ENCODE measurements at regions of chr15 and their contacts with region 1.

Region 1: DNA sequence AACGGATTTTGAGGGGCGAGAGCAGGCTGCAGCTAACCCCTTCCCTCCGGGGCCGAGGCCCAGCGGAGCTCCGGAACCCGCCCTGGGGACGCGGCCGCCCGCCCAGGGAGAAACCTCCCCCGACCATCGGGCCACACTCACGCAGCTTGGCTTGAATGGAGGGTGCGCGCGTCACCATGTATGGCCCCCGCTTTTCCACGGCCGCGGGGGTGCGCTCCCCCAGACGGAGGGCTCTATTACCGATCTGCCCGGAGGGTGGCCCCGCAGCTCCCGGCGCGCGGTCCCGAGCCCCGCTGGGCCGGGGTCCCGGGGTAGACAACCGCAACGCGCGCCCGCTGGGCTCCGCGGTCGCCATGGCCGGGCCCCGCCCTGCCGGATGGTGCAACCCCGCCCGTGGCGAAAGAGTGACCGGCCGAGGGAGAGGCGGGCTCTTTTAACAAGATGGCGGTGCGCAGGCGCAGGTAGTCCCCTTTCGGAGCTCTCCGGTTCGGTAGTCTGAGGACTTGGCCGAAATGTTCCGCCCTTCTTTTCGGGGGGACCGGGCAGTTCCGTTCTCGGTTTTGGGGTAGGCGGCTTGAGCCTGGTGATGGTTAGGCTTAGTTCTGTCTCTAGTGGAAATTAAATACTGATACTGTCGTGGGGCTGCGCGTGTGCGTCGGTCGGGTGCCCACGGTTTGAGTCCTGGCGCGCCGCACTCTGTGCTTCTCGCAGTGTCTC is at the start of gene FAM219B:
- DNase-seq: peak; percentile 60
- H3K4me3 ChIP-seq: peak within 1 kb of the TSS; percentile 81
- H3K27ac ChIP-seq: peak within 1 kb of the TSS; percentile 81
- H3K27me3 ChIP-seq: no peaks in the 10 kb centered on the region
- CTCF ChIP-seq: no peak
- polyA plus RNA-seq, gene FAM219B: 38.2 and 43.2 TPM in 2 replicates

Region 2: GRCh38 chr15:74781431-74782258 is 125.0 kb before region 1 on chr15 and contains the start of gene CSK:
- CTCF ChIA-PET with region 1: interaction called, 17 read pairs
- POLR2A ChIA-PET with region 1: no interaction called
- DNase-seq: no peak
- H3K4me3 ChIP-seq: peak within 1 kb of the TSS; percentile 90
- H3K27ac ChIP-seq: no peak within 1 kb of the TSS
- H3K27me3 ChIP-seq: no peaks in the 10 kb centered on the region
- CTCF ChIP-seq: peak; percentile 48
- polyA plus RNA-seq, gene CSK: 17.2 and 25.1 TPM in 2 replicates

Region 3: GRCh38 chr15:74816808-74817674 is 89.6 kb before region 1 on chr15:
- CTCF ChIA-PET with region 1: no interaction called
- POLR2A ChIA-PET with region 1: no interaction called
- DNase-seq: no peak
- H3K4me3 ChIP-seq: no peak overlapping the region
- H3K27ac ChIP-seq: no peak overlapping the region
- H3K27me3 ChIP-seq: no peaks in the 10 kb centered on the region
- CTCF ChIP-seq: peak; percentile 38; the same call in 1 of the 2 replicates

Region 4: DNA sequence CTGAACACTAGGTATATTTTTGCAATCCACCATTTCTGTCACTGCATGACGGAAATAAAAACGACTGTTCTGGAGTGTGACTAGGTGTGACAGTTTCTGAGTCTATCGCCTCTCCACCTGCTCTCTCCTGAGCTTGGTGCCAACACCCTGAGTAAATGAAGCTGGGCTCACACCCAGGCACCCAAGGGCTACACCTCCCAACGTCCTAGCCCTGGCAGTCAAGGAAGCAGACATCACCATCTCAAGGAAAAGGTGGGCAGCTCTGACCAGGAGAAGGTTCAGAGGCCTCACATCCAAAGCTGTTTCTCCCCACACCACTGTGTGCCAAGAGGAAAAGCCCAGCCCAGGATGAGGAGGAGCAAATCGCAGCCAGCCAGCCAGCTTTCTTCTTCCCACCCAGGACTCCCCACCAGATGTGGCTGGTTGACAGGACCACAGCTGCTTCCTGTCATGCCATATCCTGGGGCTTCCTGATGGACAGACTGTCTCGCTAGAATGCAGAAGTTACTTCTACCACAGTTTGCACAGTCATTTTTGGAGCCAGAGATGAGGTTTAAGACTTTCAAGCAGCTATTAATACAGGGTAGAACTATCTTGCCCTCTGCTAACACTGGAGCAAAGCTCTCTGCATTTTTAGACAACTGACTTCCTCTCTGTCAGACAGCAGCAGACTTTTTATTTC is 36.7 kb before region 1 on chr15:
- CTCF ChIA-PET with region 1: interaction called, 27 read pairs
- POLR2A ChIA-PET with region 1: interaction called, 4 read pairs
- DNase-seq: no peak
- H3K4me3 ChIP-seq: no peak overlapping the region
- H3K27ac ChIP-seq: no peak overlapping the region
- H3K27me3 ChIP-seq: no peaks in the 10 kb centered on the region
- CTCF ChIP-seq: no peak

Region 5: GRCh38 chr15:74889883-74890664 is 16.5 kb before region 1 on chr15 and contains the start of gene MPI:
- CTCF ChIA-PET with region 1: interaction called, 61 read pairs
- POLR2A ChIA-PET with region 1: interaction called, 5 read pairs
- DNase-seq: peak; percentile 30
- H3K4me3 ChIP-seq: peak within 1 kb of the TSS; percentile 96
- H3K27ac ChIP-seq: no peak within 1 kb of the TSS
- H3K27me3 ChIP-seq: no peaks in the 10 kb centered on the region
- CTCF ChIP-seq: no peak
- polyA plus RNA-seq, gene MPI: 55.5 and 69.4 TPM in 2 replicates

Region 6: DNA sequence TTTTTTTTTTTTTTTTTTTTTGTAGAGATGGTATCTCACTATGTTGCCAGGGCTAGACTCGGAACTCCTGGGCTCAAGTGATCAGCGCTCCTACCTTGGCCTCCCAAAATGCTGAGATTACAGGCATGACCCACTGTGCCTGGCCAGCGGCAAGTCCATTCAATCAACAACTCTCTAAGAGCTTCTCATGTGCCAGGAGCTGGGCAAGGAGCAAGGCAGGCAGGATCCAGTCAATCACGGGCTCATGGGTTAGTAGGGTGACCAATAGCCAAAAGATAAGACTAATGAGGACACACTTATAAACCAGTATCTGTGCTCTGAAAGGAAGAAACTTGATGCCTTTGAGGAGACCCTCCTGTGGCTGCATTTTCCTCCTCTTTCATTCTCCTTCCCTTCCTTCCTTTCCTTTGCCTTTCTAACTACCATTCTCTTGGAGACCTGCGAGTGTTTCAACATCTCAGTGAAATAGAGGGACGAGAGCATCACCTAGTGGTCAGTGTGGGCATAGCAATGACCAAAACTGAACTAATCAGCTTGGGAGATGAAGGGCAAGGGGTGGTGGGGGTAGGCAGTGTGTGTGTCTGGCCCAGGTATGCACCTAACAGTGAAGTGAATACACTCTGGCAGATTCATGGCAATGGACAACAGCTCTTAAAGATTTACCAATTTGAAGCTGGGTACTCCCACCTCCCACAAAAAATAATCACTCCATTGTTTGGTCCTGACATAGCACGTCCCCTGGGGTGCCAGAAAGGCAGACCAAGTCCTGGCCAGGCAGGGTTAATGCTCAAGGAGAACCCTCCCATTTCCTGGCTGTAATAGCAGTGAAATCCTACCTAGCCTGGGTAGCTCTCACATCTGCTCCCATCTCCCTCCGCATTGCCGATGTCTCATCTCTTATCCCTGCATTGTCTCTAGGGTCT is 43.7 kb after region 1 on chr15:
- CTCF ChIA-PET with region 1: interaction called, 29 read pairs
- POLR2A ChIA-PET with region 1: no interaction called
- DNase-seq: peak; percentile 21
- H3K4me3 ChIP-seq: no peak overlapping the region
- H3K27ac ChIP-seq: no peak overlapping the region
- H3K27me3 ChIP-seq: peaks cover 5% of the 10 kb centered on the region
- CTCF ChIP-seq: peak; percentile 100

Measured in AG04450 (cell line).